Activated CD4-positive, alpha-beta T cell treated with anti-CD3 and anti-CD28 coated beads for 36 hours (primary cell): ENCODE measurements at regions of chr7 and their contacts with region 1.

Region 1: GRCh38 chr7:66150471-66150870 is 35.8 kb downstream of the CRCP start:
- DNase-seq: no peak
- ATAC-seq: no peak
- H3K4me3 Mint-ChIP-seq: no peak overlapping the region
- H3K27ac Mint-ChIP-seq: peak overlapping the region; percentile 29
- H3K4me1 Mint-ChIP-seq: peaks cover 24% of the 10 kb centered on the region
- H3K27me3 Mint-ChIP-seq: no peaks in the 10 kb centered on the region

Region 2: DNA sequence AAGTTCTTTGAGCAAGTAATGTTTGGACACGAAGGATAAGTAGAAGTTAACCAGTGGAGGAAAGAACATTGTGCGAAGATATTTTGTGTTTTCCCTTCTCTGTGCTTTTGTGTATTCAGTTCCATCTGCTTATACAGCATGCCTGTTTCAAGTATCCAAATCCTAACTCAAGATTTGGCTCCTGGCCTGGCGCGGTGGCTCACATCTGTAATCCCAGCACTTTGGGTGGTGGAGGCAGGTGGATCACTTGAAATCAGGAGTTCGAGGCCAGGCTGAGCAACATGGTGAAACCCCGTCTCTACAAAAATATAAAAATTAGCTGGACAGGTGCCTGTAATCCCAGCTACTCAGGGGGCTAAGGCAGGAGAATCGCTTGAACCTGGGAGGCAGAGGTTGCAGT is 13.9 kb after region 1 on chr7:
- CTCF ChIA-PET with region 1: interaction called, 5 read pairs
- POLR2A ChIA-PET with region 1: no interaction called
- intact Hi-C with region 1: loop called in 1 of 2 experiments (anchors 2 kb)
- DNase-seq: no peak
- ATAC-seq: no peak
- H3K4me3 Mint-ChIP-seq: no peak overlapping the region
- H3K27ac Mint-ChIP-seq: no peak overlapping the region
- H3K4me1 Mint-ChIP-seq: no peaks in the 10 kb centered on the region
- H3K27me3 Mint-ChIP-seq: no peaks in the 10 kb centered on the region

Region 3: DNA sequence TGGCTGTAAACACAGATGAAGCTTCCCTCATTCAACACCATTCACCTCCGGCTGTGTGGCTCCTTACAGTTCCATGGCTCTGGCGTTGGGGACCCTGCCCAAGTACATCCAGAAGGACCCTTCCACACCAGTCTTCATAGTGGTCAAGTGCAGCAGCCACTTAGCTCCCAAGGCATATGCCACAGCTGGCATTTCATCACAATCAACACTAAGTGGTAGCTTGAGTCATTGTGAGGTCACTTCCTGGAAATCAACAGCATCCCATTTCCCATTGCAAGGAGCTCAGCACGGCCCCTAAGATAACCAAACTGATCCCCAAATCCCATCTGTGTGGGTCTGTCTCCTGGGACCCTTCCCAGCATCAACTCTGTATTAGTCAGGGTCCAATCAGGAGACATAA is 229.3 kb after region 1 on chr7:
- CTCF ChIA-PET with region 1: no interaction called
- POLR2A ChIA-PET with region 1: no interaction called
- intact Hi-C with region 1: no loop called
- DNase-seq: no peak
- ATAC-seq: no peak
- H3K4me3 Mint-ChIP-seq: no peak overlapping the region
- H3K27ac Mint-ChIP-seq: no peak overlapping the region
- H3K4me1 Mint-ChIP-seq: no peaks in the 10 kb centered on the region
- H3K27me3 Mint-ChIP-seq: no peaks in the 10 kb centered on the region